Activated CD8-positive, alpha-beta T cell treated with anti-CD3 and anti-CD28 coated beads for 36 hours (primary cell): ENCODE measurements at regions of chr13 and their contacts with region 1.

Region 1: DNA sequence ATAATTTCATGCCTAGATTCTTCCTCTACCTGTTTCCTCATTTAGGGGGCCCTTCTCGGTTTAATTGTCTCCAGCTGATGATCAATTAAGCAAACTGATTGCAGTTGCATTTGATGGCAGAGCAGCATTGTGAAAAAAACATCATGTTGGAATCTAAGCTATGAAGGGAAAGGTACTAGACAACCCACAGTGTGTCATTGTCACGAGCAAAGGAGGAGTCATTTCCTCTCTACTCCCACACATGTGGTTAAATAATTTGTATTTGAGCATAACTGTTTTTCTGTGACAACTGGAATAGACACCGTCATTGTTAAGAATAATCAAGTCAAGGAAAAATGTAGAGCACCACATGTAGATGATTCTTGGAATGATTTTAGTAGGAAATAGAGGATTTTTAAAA is 240.3 kb downstream of the DCT start:
- DNase-seq: peak; percentile 42
- ATAC-seq: peak; percentile 72
- H3K4me3 Mint-ChIP-seq: no peak overlapping the region
- H3K27ac Mint-ChIP-seq: no peak overlapping the region
- H3K4me1 Mint-ChIP-seq: peaks cover 43% of the 10 kb centered on the region
- H3K27me3 Mint-ChIP-seq: no peaks in the 10 kb centered on the region
- CTCF ChIP-seq: no peak

Region 2: DNA sequence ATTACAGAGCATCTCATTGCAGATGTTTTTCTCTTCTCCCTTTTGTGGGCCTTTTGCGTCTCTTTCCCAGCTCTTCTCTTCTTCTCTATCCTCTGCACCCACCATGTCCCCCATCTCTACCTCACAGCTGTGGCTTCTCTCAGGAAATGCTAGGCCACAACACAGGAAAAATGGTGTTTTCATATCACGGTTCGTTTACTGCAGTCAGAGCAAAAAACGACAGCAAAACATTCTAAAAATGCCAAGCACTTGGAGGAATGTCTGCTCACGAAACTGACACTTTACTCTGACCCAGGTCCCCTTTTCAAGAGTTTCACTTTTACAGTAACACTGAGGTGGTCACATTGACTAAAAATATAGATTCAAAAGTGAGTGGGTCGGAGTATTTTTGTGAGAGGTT is 88.2 kb after region 1 on chr13:
- CTCF ChIA-PET with region 1: no interaction called
- POLR2A ChIA-PET with region 1: no interaction called
- intact Hi-C with region 1: loop called (anchors 5 kb)
- DNase-seq: peak; percentile 30
- ATAC-seq: peak; percentile 72
- H3K4me3 Mint-ChIP-seq: no peak overlapping the region
- H3K27ac Mint-ChIP-seq: peak overlapping the region; percentile 45
- H3K4me1 Mint-ChIP-seq: peaks cover 73% of the 10 kb centered on the region
- H3K27me3 Mint-ChIP-seq: peaks cover 8% of the 10 kb centered on the region
- CTCF ChIP-seq: no peak

Region 3: DNA sequence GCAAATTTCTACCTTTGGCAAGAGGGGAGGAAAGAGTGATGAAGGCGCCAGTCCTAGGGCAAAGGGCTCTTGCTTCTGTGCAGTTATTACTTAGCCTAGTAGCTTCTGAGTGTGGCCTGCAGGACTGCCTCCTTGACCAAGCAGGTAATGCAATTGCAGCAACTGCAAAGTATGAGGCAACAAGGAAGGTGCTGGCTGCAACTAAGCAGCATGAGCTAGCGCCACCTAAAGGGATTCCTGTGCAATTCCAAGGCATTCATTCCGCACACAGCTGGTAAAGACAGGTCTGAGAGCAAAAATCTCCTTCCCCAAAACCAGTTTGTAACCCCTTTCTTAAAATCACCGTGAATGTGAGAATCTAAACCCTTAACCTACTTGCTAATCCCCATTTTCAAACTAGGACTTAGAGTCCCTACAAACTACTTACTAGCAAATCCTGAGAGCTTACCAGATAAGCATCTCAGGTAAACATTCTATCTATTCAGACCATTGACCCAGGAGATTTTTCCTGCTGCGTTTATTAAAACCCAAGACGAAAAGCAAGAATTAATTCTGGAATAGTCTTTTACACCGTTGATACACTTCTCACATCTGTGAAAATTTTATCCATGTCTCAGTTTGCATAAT is 177.4 kb after region 1 on chr13:
- CTCF ChIA-PET with region 1: no interaction called
- POLR2A ChIA-PET with region 1: no interaction called
- intact Hi-C with region 1: loop called (anchors 5 kb)
- DNase-seq: no peak
- ATAC-seq: no peak
- H3K4me3 Mint-ChIP-seq: no peak overlapping the region
- H3K27ac Mint-ChIP-seq: no peak overlapping the region
- H3K4me1 Mint-ChIP-seq: peaks cover 44% of the 10 kb centered on the region
- H3K27me3 Mint-ChIP-seq: peaks cover 2% of the 10 kb centered on the region
- CTCF ChIP-seq: no peak